CD8-positive, alpha-beta T cell (primary cell): ENCODE measurements at regions of chr19 and their contacts with region 1.

Region 1: GRCh38 chr19:55632463-55632834 is 8.1 kb upstream of the ZNF784 start:
- DNase-seq: peak; percentile 72 to 95 (median 89)
- ATAC-seq: peak; percentile 46
- H3K4me3 ChIP-seq: no peak overlapping the region
- H3K4me3 Mint-ChIP-seq: peak overlapping the region; percentile 23
- H3K27ac ChIP-seq: no peak overlapping the region
- H3K27ac Mint-ChIP-seq: peak overlapping the region; percentile 63
- H3K4me1 ChIP-seq: peaks cover 31% of the 10 kb centered on the region
- H3K4me1 Mint-ChIP-seq: peaks cover 40% of the 10 kb centered on the region
- H3K27me3 ChIP-seq: no peaks in the 10 kb centered on the region
- H3K27me3 Mint-ChIP-seq: no peaks in the 10 kb centered on the region
- CTCF ChIP-seq: peak; percentile 45

Region 2: DNA sequence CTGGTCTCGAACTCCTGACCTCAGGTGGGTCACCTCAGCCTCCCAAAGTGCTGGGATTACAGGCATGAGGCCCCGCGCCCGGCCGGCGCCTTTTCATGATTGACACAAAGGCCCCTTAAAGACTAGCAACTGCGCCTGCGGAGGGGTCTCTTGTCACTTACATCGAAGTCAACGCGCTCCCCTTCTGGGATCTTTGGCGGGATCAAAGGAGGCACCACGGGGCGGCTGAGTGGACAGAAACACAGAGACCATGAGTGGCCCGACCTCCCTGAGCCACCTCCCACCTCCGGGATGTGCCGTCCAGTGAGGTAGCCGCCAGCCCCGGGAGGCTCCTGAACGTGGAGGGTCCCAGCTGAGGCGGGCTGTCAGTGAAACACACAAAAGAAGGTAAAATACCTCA is 490.8 kb before region 1 on chr19:
- CTCF ChIA-PET with region 1: interaction called, 10 read pairs
- POLR2A ChIA-PET with region 1: interaction called, 3 read pairs
- intact Hi-C with region 1: no loop called
- DNase-seq: no peak
- ATAC-seq: no peak
- H3K4me3 ChIP-seq: no peak overlapping the region
- H3K4me3 Mint-ChIP-seq: no peak overlapping the region
- H3K27ac ChIP-seq: no peak overlapping the region
- H3K27ac Mint-ChIP-seq: no peak overlapping the region
- H3K4me1 ChIP-seq: peaks cover 6% of the 10 kb centered on the region
- H3K4me1 Mint-ChIP-seq: peaks cover 3% of the 10 kb centered on the region
- H3K27me3 ChIP-seq: peaks cover 22 to 58% of the 10 kb centered on the region in 2 experiments
- H3K27me3 Mint-ChIP-seq: peaks cover 47% of the 10 kb centered on the region
- CTCF ChIP-seq: no peak

Region 3: DNA sequence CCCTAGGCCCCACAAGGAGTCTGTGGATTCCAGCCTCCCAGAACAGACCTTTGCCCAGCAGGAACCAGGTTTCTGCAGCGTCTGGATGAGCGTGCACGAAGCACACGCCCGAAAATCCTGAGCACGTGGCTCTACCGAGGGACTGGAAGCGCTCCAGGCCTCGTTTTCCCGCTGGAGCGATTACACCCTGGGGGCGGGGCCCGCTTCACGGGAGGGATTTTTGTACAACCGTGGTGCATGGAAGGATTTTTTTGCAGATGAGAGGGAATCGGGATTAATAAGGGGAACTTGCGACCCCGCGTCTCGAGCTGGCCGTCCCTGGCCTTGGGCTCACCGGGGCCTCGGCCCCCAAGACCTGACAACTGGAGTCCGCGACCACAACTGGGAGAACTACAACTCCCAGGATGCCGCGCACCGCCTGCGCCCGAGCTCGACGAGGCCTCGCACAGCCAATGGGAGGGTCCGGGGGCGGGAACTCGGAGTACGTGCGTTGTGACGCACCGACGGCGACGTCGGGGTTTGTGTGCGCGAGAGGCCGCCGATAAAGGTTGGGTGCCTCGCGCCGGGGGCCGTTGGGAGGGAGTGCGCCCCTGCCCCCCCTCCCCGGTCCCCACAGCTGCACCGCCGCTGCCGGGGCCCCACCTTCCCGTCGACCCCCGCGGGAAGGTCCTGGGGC is 156.2 kb before region 1 on chr19 and contains the start of gene ZNF628:
- CTCF ChIA-PET with region 1: interaction called, 13 read pairs
- POLR2A ChIA-PET with region 1: interaction called, 13 read pairs
- intact Hi-C with region 1: no loop called
- DNase-seq: peak; percentile 95 to 99 (median 98)
- ATAC-seq: peak; percentile 93
- H3K4me3 ChIP-seq: peak within 1 kb of the TSS; percentile 70 to 72
- H3K4me3 Mint-ChIP-seq: peak within 1 kb of the TSS; percentile 85
- H3K27ac ChIP-seq: peak within 1 kb of the TSS; percentile 58 to 91
- H3K27ac Mint-ChIP-seq: peak within 1 kb of the TSS; percentile 88
- H3K4me1 ChIP-seq: peaks cover 17% of the 10 kb centered on the region
- H3K4me1 Mint-ChIP-seq: peaks cover 34% of the 10 kb centered on the region
- H3K27me3 ChIP-seq: no peaks in the 10 kb centered on the region
- H3K27me3 Mint-ChIP-seq: no peaks in the 10 kb centered on the region
- CTCF ChIP-seq: no peak
- total RNA-seq, gene ZNF628: 27.0 to 27.8 TPM

Region 4: GRCh38 chr19:55586976-55587668 is 45.3 kb before region 1 on chr19:
- CTCF ChIA-PET with region 1: interaction called, 18 read pairs
- POLR2A ChIA-PET with region 1: interaction called, 3 read pairs
- intact Hi-C with region 1: no loop called
- DNase-seq: peak; percentile 86 to 95 (median 92)
- ATAC-seq: peak; percentile 96
- H3K4me3 ChIP-seq: peak overlapping the region; percentile 32 to 55
- H3K4me3 Mint-ChIP-seq: peak overlapping the region; percentile 88
- H3K27ac ChIP-seq: peak overlapping the region in 1 of 2 experiments; percentile 24
- H3K27ac Mint-ChIP-seq: peak overlapping the region; percentile 45
- H3K4me1 ChIP-seq: peaks cover 25% of the 10 kb centered on the region
- H3K4me1 Mint-ChIP-seq: peaks cover 30% of the 10 kb centered on the region
- H3K27me3 ChIP-seq: no peaks in the 10 kb centered on the region
- H3K27me3 Mint-ChIP-seq: no peaks in the 10 kb centered on the region
- CTCF ChIP-seq: no peak

Region 5: GRCh38 chr19:55643348-55644176 is 11.1 kb after region 1 on chr19 and contains the start of gene ZNF581:
- CTCF ChIA-PET with region 1: interaction called, 32 read pairs
- POLR2A ChIA-PET with region 1: interaction called, 29 read pairs
- intact Hi-C with region 1: loop called (anchors 1 kb)
- DNase-seq: peak; percentile 53 to 91 (median 77)
- ATAC-seq: peak; percentile 55
- H3K4me3 ChIP-seq: peak within 1 kb of the TSS; percentile 66 to 73
- H3K4me3 Mint-ChIP-seq: peak within 1 kb of the TSS; percentile 95
- H3K27ac ChIP-seq: peak within 1 kb of the TSS; percentile 65 to 79
- H3K27ac Mint-ChIP-seq: peak within 1 kb of the TSS; percentile 97
- H3K4me1 ChIP-seq: peaks cover 42% of the 10 kb centered on the region
- H3K4me1 Mint-ChIP-seq: peaks cover 55% of the 10 kb centered on the region
- H3K27me3 ChIP-seq: no peaks in the 10 kb centered on the region
- H3K27me3 Mint-ChIP-seq: no peaks in the 10 kb centered on the region
- CTCF ChIP-seq: no peak
- total RNA-seq, gene ZNF581: 25.6 to 25.7 TPM

Region 6: DNA sequence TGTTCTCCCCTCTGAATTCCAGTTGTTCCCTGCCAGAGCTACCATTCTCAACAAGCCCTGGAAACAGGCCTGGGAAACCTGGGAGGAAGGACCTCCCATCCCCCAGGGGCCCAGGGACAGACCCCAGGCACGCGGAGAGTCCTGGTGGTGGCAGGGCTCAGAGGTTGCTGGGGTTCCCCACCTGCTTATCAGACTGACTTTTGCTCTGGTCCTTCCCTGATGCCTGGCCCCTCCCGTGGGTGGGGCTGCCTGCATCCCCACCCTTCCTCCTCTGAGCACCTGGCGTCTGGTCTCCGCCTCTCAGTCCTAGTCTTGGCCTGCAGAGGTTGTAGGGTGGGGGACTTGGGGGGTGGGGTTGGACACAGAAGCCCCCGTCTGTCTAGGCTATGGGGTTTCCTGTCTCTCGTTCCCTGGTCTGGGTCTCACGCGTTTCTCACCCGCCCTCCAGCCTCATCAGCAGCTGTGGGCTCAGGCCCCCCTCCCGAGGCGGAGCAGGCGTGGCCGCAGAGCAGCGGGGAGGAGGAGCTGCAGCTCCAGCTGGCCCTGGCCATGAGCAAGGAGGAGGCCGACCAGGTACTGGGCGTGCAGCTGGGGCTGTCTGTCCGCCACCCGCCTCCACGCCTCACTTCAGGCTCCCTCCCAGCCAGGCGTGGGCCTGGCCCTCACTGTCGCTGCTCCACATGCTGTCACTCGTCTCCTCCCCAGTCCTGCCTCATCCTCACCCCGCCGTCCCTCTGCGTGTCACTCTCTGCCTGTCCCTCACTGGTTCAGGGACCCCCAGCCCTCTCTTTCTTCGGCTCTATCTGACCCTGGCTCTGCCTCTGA is 56.2 kb after region 1 on chr19:
- CTCF ChIA-PET with region 1: no interaction called
- POLR2A ChIA-PET with region 1: no interaction called
- intact Hi-C with region 1: no loop called
- DNase-seq: peak in 1 of 9 experiments; percentile 5
- ATAC-seq: no peak
- H3K4me3 ChIP-seq: no peak overlapping the region
- H3K4me3 Mint-ChIP-seq: no peak overlapping the region
- H3K27ac ChIP-seq: no peak overlapping the region
- H3K27ac Mint-ChIP-seq: no peak overlapping the region
- H3K4me1 ChIP-seq: no peaks in the 10 kb centered on the region
- H3K4me1 Mint-ChIP-seq: peaks cover 15% of the 10 kb centered on the region
- H3K27me3 ChIP-seq: no peaks in the 10 kb centered on the region
- H3K27me3 Mint-ChIP-seq: no peaks in the 10 kb centered on the region
- CTCF ChIP-seq: no peak

Region 7: DNA sequence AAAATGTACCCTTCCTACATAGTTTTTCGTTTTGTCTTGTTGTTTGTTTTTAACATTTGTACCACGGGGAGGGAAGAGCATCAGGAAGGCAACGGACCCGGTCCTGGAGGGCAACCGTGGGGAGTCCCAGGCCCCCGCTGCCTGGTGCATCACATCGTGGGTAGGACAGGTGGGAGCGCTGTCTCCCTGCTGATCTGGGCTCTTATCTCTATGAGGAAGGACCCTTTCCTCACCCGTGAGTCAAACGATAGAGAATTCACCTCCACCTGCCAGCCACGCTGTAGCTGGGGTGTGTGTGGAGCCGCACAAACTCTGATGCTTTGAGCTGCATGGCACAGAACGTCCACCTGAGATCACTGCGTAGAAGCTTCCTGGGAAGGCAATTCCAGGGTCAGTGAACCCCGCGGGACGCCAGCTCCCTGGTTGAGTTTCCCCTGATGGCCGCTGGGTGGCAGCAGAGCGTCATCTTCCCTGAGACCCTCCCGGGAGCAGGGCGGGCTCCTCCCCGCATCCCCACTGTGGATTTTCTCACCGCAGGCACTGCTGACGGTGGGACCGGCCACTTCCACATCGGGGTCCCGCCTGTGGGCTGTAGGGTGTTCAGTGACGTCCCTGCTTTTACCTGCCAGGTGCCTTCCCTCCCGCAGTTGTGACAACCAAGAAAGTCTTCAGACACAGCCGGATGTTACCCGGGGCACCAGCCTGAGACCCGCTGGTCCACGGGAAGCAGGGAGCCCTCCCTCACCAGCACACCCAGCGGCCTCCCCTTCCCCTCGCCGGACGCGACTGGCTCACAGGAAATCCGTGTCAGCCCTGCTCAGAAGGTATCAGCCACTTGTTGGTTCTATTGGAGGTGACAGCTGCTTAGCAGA is 433.9 kb after region 1 on chr19:
- CTCF ChIA-PET with region 1: no interaction called
- POLR2A ChIA-PET with region 1: no interaction called
- intact Hi-C with region 1: loop called in 1 of 2 experiments (anchors 5 kb)
- DNase-seq: peak; percentile 26 to 80 (median 65)
- ATAC-seq: peak; percentile 77
- H3K4me3 ChIP-seq: peak overlapping the region; percentile 13 to 25
- H3K4me3 Mint-ChIP-seq: peak overlapping the region; percentile 71
- H3K27ac ChIP-seq: no peak overlapping the region
- H3K27ac Mint-ChIP-seq: peak overlapping the region; percentile 37
- H3K4me1 ChIP-seq: peaks cover 6% of the 10 kb centered on the region
- H3K4me1 Mint-ChIP-seq: peaks cover 13% of the 10 kb centered on the region
- H3K27me3 ChIP-seq: peaks cover 4 to 8% of the 10 kb centered on the region in 2 experiments
- H3K27me3 Mint-ChIP-seq: peaks cover 33% of the 10 kb centered on the region
- CTCF ChIP-seq: peak; percentile 89